ENCODE measurements at regions of chr14 and their contacts with region 1.

Region 1: DNA sequence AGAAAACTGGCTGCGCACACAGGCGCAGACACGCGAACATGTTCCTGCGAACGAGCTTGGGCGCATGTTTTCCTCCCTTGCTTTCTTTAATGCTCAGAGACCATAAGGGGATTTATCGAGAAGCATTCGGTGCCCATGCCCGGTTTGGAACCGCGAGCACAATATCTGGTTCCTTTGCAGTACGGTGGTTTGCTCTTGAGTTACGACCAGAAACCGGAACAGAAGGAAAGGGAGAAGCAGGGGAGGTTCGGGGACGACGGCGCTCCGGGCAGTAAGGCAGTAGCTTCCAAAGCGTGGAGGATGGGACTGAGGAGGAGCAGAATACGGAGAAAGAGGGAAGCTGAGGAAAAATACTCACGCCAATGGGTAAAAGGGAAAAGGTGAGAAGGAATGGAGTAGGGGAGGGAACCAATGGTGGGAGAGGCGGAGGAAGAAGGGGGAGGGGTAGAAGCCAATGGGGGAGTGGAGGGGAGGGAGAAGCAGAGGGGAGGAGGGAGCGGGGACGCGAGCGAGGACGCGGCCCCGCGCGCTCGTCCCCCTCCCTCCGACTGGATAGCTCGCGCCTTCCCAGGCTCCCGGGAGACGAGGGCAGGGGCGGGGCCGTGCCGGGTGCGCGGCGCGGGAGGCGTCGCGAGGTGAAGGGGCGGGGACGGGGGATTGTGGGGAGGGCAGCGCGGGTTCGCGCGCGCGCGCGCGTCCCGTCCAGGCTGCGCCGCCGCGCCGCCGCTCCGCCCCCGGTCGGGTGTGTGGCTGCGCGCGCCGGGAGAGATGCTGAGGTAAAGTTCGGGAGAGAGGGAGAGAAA is 625 bp upstream of the ARHGAP5 start:
- DNase-seq: peak; percentile 76 to 84 (median 80)
- H3K4me3 ChIP-seq: peak overlapping the region; percentile 71 to 73
- H3K4me3 Mint-ChIP-seq: peak overlapping the region; percentile 92 to 100 (median 96)
- H3K27ac ChIP-seq: peak overlapping the region; percentile 74
- H3K27ac Mint-ChIP-seq: peak overlapping the region; percentile 92 to 98 (median 96)
- H3K4me1 ChIP-seq: peaks cover 38% of the 10 kb centered on the region
- H3K4me1 Mint-ChIP-seq: peaks cover 22 to 48% (median 35%) of the 10 kb centered on the region in 4 donors
- H3K27me3 ChIP-seq: no peaks in the 10 kb centered on the region
- H3K27me3 Mint-ChIP-seq: peaks cover 0 to 2% of the 10 kb centered on the region in 2 donors

Region 2: GRCh38 chr14:30621940-30622830 is 1454.3 kb before region 1 on chr14 and contains the start of gene SCFD1:
- CTCF ChIA-PET with region 1: no interaction called
- POLR2A ChIA-PET with region 1: no interaction called
- intact Hi-C with region 1: loop called (anchors 10 kb)
- DNase-seq: peak; percentile 88 to 93 (median 90)
- H3K4me3 ChIP-seq: peak within 1 kb of the TSS; percentile 74 to 97
- H3K4me3 Mint-ChIP-seq: peak within 1 kb of the TSS; percentile 93 to 99 (median 96)
- H3K27ac ChIP-seq: peak within 1 kb of the TSS; percentile 81
- H3K27ac Mint-ChIP-seq: peak within 1 kb of the TSS; percentile 96 to 99 (median 97)
- H3K4me1 ChIP-seq: peaks cover 52% of the 10 kb centered on the region
- H3K4me1 Mint-ChIP-seq: peaks cover 26 to 53% (median 40%) of the 10 kb centered on the region in 4 donors
- H3K27me3 ChIP-seq: no peaks in the 10 kb centered on the region
- H3K27me3 Mint-ChIP-seq: no peaks in the 10 kb centered on the region
- total RNA-seq, gene SCFD1: 58.1 to 72.6 TPM

Region 3: GRCh38 chr14:31420319-31421111 is 656.0 kb before region 1 on chr14 and contains the start of gene HEATR5A:
- CTCF ChIA-PET with region 1: no interaction called
- POLR2A ChIA-PET with region 1: interaction called, 7 read pairs
- intact Hi-C with region 1: loop called (anchors 1 kb)
- DNase-seq: peak; percentile 90 to 92 (median 91)
- H3K4me3 ChIP-seq: peak within 1 kb of the TSS; percentile 97 to 99
- H3K4me3 Mint-ChIP-seq: peak within 1 kb of the TSS; percentile 92 to 100 (median 98)
- H3K27ac ChIP-seq: peak within 1 kb of the TSS; percentile 66
- H3K27ac Mint-ChIP-seq: peak within 1 kb of the TSS; percentile 80 to 99 (median 96)
- H3K4me1 ChIP-seq: peaks cover 17% of the 10 kb centered on the region
- H3K4me1 Mint-ChIP-seq: peaks cover 11 to 36% (median 20%) of the 10 kb centered on the region in 4 donors
- H3K27me3 ChIP-seq: no peaks in the 10 kb centered on the region
- H3K27me3 Mint-ChIP-seq: no peaks in the 10 kb centered on the region
- total RNA-seq, gene HEATR5A: 15.1 to 16.4 TPM

Region 4: GRCh38 chr14:31561155-31561846 is 515.2 kb before region 1 on chr14 and contains the start of gene NUBPL:
- CTCF ChIA-PET with region 1: no interaction called
- POLR2A ChIA-PET with region 1: no interaction called
- intact Hi-C with region 1: loop called (anchors 1 kb)
- DNase-seq: peak; percentile 96 to 98 (median 97)
- H3K4me3 ChIP-seq: peak within 1 kb of the TSS; percentile 94
- H3K4me3 Mint-ChIP-seq: peak within 1 kb of the TSS; percentile 94 to 98 (median 96)
- H3K27ac ChIP-seq: peak within 1 kb of the TSS; percentile 62
- H3K27ac Mint-ChIP-seq: peak within 1 kb of the TSS; percentile 94 to 99 (median 98)
- H3K4me1 ChIP-seq: peaks cover 17% of the 10 kb centered on the region
- H3K4me1 Mint-ChIP-seq: peaks cover 16 to 27% (median 21%) of the 10 kb centered on the region in 4 donors
- H3K27me3 ChIP-seq: no peaks in the 10 kb centered on the region
- H3K27me3 Mint-ChIP-seq: peaks cover 9 to 21% of the 10 kb centered on the region in 2 donors
- total RNA-seq, gene NUBPL: 7.4 to 7.5 TPM

Region 5: GRCh38 chr14:31945074-31945613 is 131.3 kb before region 1 on chr14:
- CTCF ChIA-PET with region 1: interaction called, 4 read pairs
- POLR2A ChIA-PET with region 1: interaction called, 14 read pairs
- intact Hi-C with region 1: loop called (anchors 2 kb)
- DNase-seq: peak; percentile 51 to 72 (median 70)
- H3K4me3 ChIP-seq: peak overlapping the region in 1 of 2 donors; percentile 33
- H3K4me3 Mint-ChIP-seq: peak overlapping the region; percentile 71 to 86 (median 80)
- H3K27ac ChIP-seq: peak overlapping the region; percentile 39
- H3K27ac Mint-ChIP-seq: peak overlapping the region; percentile 89 to 95 (median 93)
- H3K4me1 ChIP-seq: peaks cover 52% of the 10 kb centered on the region
- H3K4me1 Mint-ChIP-seq: peaks cover 34 to 54% (median 44%) of the 10 kb centered on the region in 4 donors
- H3K27me3 ChIP-seq: no peaks in the 10 kb centered on the region
- H3K27me3 Mint-ChIP-seq: no peaks in the 10 kb centered on the region

Region 6: DNA sequence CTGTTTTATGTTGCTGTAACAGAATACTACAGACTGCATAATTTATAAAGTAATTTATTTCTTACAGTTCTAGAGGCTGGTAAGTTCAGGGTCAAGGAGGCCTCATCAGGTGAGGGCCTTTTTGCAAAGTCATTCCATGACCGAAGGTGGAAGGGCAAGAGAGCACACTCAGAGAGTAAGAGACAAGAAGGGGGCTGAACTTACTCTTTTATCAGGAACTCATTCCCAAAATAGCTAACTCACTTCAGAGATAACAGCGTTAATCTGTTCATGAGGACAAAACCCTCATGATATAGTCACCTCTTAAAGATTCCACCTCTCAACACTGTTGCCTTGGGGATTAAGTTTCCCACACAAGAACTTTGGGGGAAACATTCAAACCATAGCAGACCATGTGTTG is 73.9 kb after region 1 on chr14:
- CTCF ChIA-PET with region 1: no interaction called
- POLR2A ChIA-PET with region 1: interaction called, 4 read pairs
- intact Hi-C with region 1: loop called (anchors 5 kb)
- DNase-seq: no peak
- H3K4me3 ChIP-seq: no peak overlapping the region
- H3K4me3 Mint-ChIP-seq: no peak overlapping the region
- H3K27ac ChIP-seq: no peak overlapping the region
- H3K27ac Mint-ChIP-seq: no peak overlapping the region
- H3K4me1 ChIP-seq: no peaks in the 10 kb centered on the region
- H3K4me1 Mint-ChIP-seq: no peaks in the 10 kb centered on the region
- H3K27me3 ChIP-seq: no peaks in the 10 kb centered on the region
- H3K27me3 Mint-ChIP-seq: no peaks in the 10 kb centered on the region

Region 7: GRCh38 chr14:32259368-32260013 is 183.0 kb after region 1 on chr14:
- CTCF ChIA-PET with region 1: interaction called, 347 read pairs
- POLR2A ChIA-PET with region 1: interaction called, 7 read pairs
- intact Hi-C with region 1: no loop called
- DNase-seq: no peak
- H3K4me3 ChIP-seq: no peak overlapping the region
- H3K4me3 Mint-ChIP-seq: no peak overlapping the region
- H3K27ac ChIP-seq: no peak overlapping the region
- H3K27ac Mint-ChIP-seq: peak overlapping the region in 1 of 7 donors; percentile 0
- H3K4me1 ChIP-seq: no peaks in the 10 kb centered on the region
- H3K4me1 Mint-ChIP-seq: peaks cover 0 to 10% (median 4%) of the 10 kb centered on the region in 4 donors
- H3K27me3 ChIP-seq: no peaks in the 10 kb centered on the region
- H3K27me3 Mint-ChIP-seq: peaks cover 0 to 2% of the 10 kb centered on the region in 2 donors